ENCODE measurements at regions of chr6 and their contacts with region 1.

Region 1: DNA sequence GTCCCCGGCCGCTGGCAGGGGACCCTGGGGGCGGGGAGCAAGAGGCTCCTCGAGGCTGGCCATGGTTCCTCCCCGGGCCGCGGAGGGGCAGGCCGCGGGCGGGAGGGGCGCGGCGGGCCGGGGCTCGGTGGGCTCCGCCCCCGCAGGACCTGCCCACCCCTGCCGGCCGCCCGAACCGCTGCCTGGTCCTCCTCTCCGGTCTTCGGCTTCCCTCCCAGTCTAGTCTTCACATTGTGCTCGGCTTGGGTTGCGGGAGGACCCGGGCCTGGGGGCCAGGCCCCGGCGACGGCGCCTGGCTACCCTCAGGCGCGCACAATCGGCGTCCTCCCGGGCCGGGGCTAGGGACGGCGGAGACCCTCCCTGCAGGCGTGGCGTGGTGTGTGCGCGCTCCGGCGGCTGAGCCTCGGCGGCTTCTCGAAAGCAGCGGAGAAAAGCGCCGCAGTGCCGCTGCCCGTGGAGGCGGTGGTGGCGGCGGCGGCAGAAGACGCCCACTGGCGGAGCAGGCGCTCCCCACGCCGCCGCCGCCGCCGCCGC is at the start of gene PDE10A:
- DNase-seq: peak; percentile 88
- ATAC-seq: peak; percentile 82
- total RNA-seq, gene PDE10A: 15.7 TPM

Region 2: DNA sequence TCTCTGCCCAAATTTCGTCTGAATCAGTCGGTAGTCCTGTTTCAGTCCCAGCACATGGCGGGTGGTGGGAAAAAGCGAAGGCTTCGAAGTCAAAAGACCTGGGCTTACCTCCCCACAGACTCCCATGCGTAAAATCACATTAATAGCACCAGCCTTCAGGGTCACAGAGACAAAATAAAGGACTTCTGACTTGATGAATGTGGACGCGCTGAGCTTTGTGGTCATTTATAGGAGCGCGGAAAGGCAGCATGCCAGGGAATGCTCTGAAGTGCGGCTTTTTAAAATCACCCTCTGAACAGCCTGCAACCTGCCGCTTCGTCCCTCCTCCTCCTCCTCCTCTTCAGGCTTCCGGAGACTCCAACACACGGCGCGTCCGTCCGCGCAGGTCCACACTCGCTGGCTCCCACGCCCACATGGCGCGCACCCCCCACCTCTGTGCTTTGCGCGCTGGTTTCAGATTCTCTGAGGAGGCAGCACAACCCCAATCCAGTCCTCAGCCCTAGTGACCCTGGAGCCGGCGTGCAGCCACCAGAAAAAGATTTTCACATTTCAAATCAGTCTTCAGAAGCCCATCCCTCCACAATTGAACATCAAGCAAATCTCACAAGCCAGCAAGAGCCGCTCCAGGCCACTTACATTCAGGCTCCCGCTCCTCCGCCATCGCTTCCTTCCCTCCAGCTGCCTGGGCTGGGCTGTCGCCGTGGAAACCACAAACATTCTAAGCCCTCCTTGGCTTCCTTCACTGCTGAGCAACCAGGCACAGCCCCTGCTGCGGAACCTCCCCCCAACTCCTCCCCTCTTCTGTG is 353.7 kb before region 1 on chr6 and contains the start of gene C6orf118:
- intact Hi-C with region 1: no loop called
- DNase-seq: peak; percentile 75
- ATAC-seq: peak; percentile 91
- total RNA-seq, gene C6orf118: not detected

Region 3: DNA sequence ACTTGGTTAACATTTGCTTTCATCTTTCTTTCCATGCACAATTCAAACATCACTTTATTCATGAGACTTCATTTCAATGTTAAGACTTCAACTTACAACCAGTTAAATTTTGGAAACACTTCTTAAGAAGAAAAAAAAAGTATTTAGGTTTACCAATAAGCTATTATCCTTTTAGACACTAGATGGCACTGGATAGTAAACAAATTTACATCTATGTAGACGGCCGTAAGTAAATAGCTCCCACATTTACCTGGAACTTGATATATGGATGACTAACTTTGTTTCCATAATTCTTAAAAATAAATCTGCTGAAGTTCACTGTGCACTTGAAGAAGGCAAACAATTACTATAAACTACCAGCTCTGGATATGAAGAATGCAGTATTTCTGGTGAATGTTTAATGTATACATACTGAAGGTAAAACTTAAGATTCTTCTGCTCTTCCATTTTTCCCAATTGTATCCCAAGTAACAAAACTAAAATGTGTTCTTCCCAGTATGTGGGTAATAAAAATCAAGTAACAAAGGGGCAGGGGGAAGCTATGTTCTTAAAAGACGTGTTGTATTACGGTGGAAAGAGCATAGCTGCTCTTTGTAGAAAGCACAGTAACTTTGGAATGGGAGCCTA is 222.8 kb before region 1 on chr6:
- intact Hi-C with region 1: loop called (anchors 2 kb)
- DNase-seq: no peak
- ATAC-seq: no peak

Region 4: DNA sequence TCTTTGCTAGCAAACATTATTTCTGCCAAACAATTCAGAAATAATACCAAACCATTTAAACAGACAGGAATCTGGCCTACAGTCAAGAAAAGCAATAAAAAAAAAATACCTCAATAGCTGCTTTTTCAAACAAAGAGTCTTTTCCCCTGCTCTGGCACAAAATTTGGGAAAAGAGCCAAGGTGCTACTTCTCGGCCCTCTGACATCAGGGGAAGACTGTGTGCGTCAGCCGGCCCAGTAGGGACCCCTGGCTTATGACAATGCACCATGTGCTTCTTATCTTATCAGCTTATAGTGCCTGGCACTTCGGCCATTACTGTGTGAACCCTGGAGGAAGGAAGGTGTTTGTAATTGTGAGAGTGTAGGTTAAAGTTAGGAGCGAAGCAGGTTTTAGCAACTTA is 89.1 kb before region 1 on chr6:
- intact Hi-C with region 1: loop called (anchors 5 kb)
- DNase-seq: no peak
- ATAC-seq: peak; percentile 84

Region 5: GRCh38 chr6:165694296-165694695 is 31.5 kb after region 1 on chr6:
- intact Hi-C with region 1: loop called (anchors 1 kb)
- DNase-seq: no peak
- ATAC-seq: peak; percentile 77

Region 6: DNA sequence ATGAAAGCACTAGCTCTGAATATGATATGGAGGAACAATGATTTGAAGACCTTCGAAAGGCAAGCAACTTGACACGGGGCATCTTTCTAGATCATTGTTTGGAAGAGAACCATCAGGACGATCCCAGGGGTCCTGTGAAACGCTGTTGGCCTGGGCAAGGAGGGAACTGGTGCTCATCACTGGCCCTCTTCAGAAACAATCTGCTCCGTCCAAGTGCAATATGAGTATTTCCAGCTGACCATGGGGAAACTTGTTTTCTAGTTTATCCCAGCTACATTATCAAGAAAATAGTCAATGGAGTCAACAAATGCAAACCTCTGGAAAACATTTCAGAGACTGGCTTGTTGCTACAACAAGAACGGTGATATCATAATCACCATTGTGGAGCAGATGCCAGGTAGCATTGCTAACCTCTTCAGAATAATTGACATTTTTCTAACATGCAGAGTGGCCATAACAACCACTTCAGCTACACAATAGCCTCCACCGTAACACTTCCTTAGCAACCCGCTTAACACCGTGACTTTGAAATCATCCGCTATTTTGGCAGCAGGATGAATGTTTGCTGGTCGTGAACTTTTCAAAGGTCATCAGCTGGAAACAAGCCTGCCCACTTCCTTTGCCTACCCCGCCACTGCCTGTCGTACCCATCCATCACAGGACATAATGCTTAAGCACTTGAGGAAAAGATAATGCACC is 112.2 kb after region 1 on chr6:
- intact Hi-C with region 1: loop called (anchors 2 kb)
- DNase-seq: no peak
- ATAC-seq: peak; percentile 96